ENCODE measurements at regions of chr2 and their contacts with region 1.

Region 1: DNA sequence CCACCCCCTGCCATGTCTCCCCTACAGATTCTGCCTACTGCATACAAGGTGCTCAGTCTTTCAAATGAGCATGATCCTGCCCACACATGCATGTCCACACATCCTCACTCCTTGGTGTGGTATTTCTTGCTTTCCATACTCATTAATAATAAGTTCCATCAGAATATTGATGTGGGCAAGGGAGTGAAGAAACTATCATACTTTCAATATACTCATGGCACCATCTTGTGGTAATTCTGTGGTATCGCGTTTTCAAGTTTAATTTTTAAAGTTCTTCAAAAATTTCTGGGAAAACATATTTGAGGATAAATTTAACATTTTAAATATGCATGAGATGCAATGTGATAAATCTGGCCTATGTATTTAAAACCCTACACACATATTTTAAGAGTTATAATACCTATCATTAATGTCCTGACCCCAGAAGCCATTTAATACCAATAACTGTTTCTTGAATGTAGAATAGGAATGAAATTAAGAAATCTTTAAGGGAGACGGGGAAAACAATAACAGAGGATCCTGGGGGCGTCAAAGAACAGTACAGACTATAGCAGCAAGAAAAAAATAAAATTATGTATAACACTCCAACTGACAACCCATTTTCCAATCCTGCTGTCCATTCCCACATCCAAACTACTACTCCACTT is 110.1 kb downstream of the ZNF385B start:
- DNase-seq: no peak
- ATAC-seq: no peak
- H3K4me3 Mint-ChIP-seq: no peak overlapping the region
- H3K27ac Mint-ChIP-seq: no peak overlapping the region
- H3K4me1 Mint-ChIP-seq: no peaks in the 10 kb centered on the region
- H3K27me3 Mint-ChIP-seq: no peaks in the 10 kb centered on the region
- CTCF ChIP-seq: no peak

Region 2: DNA sequence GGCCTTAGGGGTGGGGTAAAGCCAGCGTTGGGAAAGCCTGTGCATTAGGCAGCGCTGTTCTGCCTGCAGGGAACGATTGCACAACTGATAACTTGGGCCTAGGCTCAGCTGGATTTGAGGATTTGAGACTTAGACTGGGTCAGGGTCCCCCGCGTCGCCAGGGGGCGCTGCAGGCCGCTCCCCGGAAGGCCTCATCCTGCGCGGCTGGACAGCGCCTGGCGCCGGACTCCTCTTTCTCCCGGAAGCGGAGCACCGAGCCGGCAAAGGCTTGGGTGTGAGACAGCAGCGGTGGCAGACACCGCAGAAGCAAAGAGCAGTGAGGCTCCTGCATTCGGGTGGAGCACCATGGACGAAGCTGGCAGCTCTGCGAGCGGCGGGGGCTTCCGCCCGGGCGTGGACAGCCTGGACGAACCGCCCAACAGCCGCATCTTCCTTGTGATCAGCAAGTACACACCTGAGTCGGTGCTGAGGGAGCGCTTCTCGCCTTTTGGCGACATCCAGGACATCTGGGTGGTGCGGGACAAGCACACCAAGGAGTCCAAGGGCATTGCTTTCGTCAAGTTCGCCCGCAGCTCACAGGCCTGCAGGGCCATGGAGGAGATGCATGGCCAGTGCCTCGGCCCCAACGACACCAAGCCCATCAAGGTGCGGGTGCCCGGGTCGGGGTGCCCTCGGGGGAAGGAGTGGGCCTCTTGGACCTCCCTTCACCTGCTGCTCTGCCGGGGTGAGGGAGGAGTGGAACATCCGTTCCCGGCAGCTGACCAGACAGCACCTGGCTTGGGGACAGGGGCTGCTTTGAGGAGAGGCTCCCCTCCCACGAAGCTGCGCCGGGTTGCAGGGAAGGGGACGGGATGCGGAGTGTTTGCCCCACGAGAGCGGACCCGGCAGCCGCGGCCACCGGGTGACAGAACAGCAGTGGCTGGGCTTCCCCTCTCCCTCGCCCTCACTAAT is 1638.8 kb before region 1 on chr2 and contains the start of gene RBM45:
- CTCF ChIA-PET with region 1: no interaction called
- POLR2A ChIA-PET with region 1: no interaction called
- intact Hi-C with region 1: loop called (anchors 5 kb)
- DNase-seq: peak; percentile 81
- ATAC-seq: peak; percentile 98
- H3K4me3 Mint-ChIP-seq: peak within 1 kb of the TSS; percentile 96
- H3K27ac Mint-ChIP-seq: peak within 1 kb of the TSS; percentile 72
- H3K4me1 Mint-ChIP-seq: peaks cover 36% of the 10 kb centered on the region
- H3K27me3 Mint-ChIP-seq: no peaks in the 10 kb centered on the region
- CTCF ChIP-seq: peak; percentile 93
- total RNA-seq, gene RBM45: 17.9 and 18.8 TPM in 2 replicates

Region 3: DNA sequence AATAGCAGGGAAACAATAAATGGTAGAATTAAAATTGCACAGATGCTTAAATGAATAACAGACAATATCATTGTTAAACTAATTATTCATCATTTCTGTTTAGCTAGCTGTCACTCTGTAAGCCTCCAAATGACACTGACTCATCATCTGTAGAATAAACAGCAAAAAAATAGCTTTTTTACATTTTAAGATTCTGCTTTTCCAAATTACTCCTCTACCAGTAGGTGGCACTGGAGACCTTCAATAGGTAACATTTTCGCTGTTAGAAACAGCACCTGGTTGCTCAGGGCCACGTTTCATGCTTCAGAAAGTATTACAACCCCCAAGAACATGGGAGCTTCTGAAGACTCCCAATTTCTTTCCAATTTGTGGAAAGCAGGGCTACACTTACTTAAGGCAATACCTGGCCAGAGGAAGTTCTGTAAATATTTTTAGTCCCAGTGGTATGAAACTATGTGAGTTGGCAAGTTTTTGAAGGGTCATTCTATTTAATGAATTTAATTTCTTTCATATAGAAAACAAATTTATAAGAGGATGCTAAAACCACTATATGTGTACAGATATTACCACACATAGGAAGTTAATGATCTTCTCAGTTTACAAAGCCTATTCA is 989.4 kb before region 1 on chr2:
- CTCF ChIA-PET with region 1: no interaction called
- POLR2A ChIA-PET with region 1: no interaction called
- intact Hi-C with region 1: loop called (anchors 1 kb)
- DNase-seq: no peak
- ATAC-seq: peak; percentile 54
- H3K4me3 Mint-ChIP-seq: no peak overlapping the region
- H3K27ac Mint-ChIP-seq: no peak overlapping the region
- H3K4me1 Mint-ChIP-seq: peaks cover 1% of the 10 kb centered on the region
- H3K27me3 Mint-ChIP-seq: no peaks in the 10 kb centered on the region
- CTCF ChIP-seq: no peak

Region 4: GRCh38 chr2:178891265-178891958 is 859.9 kb before region 1 on chr2:
- CTCF ChIA-PET with region 1: no interaction called
- POLR2A ChIA-PET with region 1: no interaction called
- intact Hi-C with region 1: loop called (anchors 2 kb)
- DNase-seq: no peak
- ATAC-seq: peak; percentile 76
- H3K4me3 Mint-ChIP-seq: no peak overlapping the region
- H3K27ac Mint-ChIP-seq: no peak overlapping the region
- H3K4me1 Mint-ChIP-seq: no peaks in the 10 kb centered on the region
- H3K27me3 Mint-ChIP-seq: no peaks in the 10 kb centered on the region
- CTCF ChIP-seq: peak; percentile 64

Region 5: GRCh38 chr2:179218848-179219594 is 532.3 kb before region 1 on chr2:
- CTCF ChIA-PET with region 1: no interaction called
- POLR2A ChIA-PET with region 1: no interaction called
- intact Hi-C with region 1: loop called (anchors 1 kb)
- DNase-seq: no peak
- ATAC-seq: peak; percentile 71
- H3K4me3 Mint-ChIP-seq: no peak overlapping the region
- H3K27ac Mint-ChIP-seq: peak overlapping the region; percentile 41
- H3K4me1 Mint-ChIP-seq: peaks cover 56% of the 10 kb centered on the region
- H3K27me3 Mint-ChIP-seq: no peaks in the 10 kb centered on the region
- CTCF ChIP-seq: peak; percentile 76

Region 6: GRCh38 chr2:179422037-179422643 is 329.1 kb before region 1 on chr2:
- CTCF ChIA-PET with region 1: interaction called, 4 read pairs
- POLR2A ChIA-PET with region 1: no interaction called
- intact Hi-C with region 1: loop called (anchors 1 kb)
- DNase-seq: peak; percentile 19
- ATAC-seq: peak; percentile 66
- H3K4me3 Mint-ChIP-seq: no peak overlapping the region
- H3K27ac Mint-ChIP-seq: no peak overlapping the region
- H3K4me1 Mint-ChIP-seq: no peaks in the 10 kb centered on the region
- H3K27me3 Mint-ChIP-seq: peaks cover 9% of the 10 kb centered on the region
- CTCF ChIP-seq: peak; percentile 40

Region 7: GRCh38 chr2:179768765-179769164 is 17.5 kb after region 1 on chr2:
- CTCF ChIA-PET with region 1: no interaction called
- POLR2A ChIA-PET with region 1: no interaction called
- intact Hi-C with region 1: no loop called
- DNase-seq: no peak
- ATAC-seq: no peak
- H3K4me3 Mint-ChIP-seq: no peak overlapping the region
- H3K27ac Mint-ChIP-seq: no peak overlapping the region
- H3K4me1 Mint-ChIP-seq: no peaks in the 10 kb centered on the region
- H3K27me3 Mint-ChIP-seq: peaks cover 8% of the 10 kb centered on the region
- CTCF ChIP-seq: no peak

Measured in activated B cell treated with CpG ODN at 0.5 μM for 24 hours (primary cell).